Transverse colon (tissue), 4 donors: ENCODE measurements at regions of chr2 and their contacts with region 1.

Region 1: DNA sequence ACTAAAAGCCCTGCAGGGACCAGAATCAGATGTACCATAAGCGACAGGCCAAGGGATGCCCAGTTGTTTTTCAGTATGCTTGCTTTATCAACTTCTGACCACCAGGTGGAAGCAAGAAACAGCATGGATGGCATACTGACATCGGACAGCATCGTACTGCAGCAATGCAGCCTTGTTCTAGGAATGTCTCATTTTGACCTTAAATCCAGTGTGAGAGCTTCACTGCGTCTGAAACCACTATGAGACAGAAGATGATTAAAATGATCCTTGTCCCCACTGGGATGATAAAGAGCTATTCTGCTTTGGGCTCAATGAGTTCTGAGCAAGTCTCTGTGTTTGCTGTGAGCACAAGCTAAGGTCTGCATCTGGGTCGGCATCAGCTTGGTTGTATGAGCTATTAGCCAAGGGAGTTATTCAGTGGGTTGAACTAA is 54.3 kb downstream of the CDK15 start:
- DNase-seq: peak; percentile 35
- H3K4me3 ChIP-seq: no peak overlapping the region
- H3K27ac ChIP-seq: no peak overlapping the region
- H3K4me1 ChIP-seq: peaks cover 0 to 18% (median 10%) of the 10 kb centered on the region in 4 donors
- H3K27me3 ChIP-seq: peaks cover 18% of the 10 kb centered on the region
- CTCF ChIP-seq: peak; percentile 72 to 81 (median 79)
- EP300 ChIP-seq: no peak
- POLR2A ChIP-seq: no peak

Region 2: DNA sequence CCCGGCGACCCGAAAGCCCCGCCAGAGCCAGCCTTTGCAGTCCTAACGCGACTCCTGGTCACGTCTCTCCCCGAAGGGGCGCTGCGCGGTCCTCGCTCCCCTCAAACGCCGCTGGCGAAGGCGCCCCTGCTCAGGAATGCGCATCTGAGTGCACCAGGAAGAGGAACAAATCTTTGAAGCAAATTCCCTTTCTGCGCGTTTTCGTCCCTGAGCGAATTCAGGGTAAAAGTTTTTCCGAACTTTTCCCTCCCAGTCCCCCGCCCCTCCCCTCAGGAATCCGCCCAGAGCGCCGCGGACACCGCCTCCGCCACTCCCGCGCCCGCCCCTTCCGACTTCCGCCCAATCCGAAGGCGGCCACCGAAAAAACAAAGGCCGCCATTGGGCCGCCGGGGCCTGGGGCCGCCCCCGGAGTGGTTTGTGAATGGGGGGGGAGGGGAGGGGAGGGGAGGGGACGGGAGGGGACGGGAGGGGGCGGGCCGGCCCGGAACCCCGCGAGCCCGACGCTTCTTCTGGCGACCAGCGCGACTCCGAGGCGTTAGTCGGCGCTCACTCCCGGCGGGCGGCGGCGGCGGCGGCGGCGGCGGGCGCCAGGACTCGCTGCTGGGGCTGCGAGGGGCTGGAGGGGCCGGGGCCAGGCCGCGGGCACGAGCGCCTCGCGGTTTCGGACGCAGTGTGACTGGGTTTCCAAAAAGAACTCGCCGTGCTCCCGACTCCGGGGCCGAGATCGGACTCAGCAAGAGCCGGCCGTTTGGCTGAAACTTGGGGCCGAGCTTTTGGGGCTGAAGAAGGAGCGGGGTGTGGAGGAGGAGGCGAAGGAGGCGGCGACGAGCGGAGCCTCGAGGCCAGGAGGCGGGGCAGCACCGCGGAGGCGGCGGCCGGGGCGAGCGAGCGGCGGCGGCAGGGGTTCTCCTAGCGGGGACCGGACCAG is 172.9 kb after region 1 on chr2 and contains the start of gene FZD7:
- in situ Hi-C with region 1: loop called in 1 of 4 experiments (anchors 10 kb)
- intact Hi-C with region 1: no loop called
- DNase-seq: peak; percentile 94
- H3K4me3 ChIP-seq: peak within 1 kb of the TSS; percentile 69 to 88 (median 80)
- H3K27ac ChIP-seq: peak within 1 kb of the TSS; percentile 91 to 99 (median 94)
- H3K4me1 ChIP-seq: peaks cover 5 to 29% (median 20%) of the 10 kb centered on the region in 4 donors
- H3K27me3 ChIP-seq: peaks cover 39% of the 10 kb centered on the region
- CTCF ChIP-seq: peak in 4 of 5 experiments; percentile 0 to 17 (median 10)
- EP300 ChIP-seq: no peak
- POLR2A ChIP-seq: peak; percentile 29
- total RNA-seq, gene FZD7: 6.2 to 14.6 (median 13.3) TPM

Region 3: GRCh38 chr2:202172439-202173211 is 312.0 kb after region 1 on chr2:
- in situ Hi-C with region 1: loop called in 3 of 4 experiments (anchors 5 to 25 kb)
- intact Hi-C with region 1: loop called (anchors 5 kb)
- DNase-seq: no peak
- H3K4me3 ChIP-seq: no peak overlapping the region
- H3K27ac ChIP-seq: peak overlapping the region in 2 of 4 donors; percentile 44 to 52
- H3K4me1 ChIP-seq: peaks cover 0 to 20% (median 5%) of the 10 kb centered on the region in 4 donors
- H3K27me3 ChIP-seq: peaks cover 6% of the 10 kb centered on the region
- CTCF ChIP-seq: no peak
- EP300 ChIP-seq: no peak
- POLR2A ChIP-seq: no peak

Region 4: GRCh38 chr2:202178342-202178958 is 317.8 kb after region 1 on chr2:
- in situ Hi-C with region 1: loop called (anchors 5 to 25 kb)
- intact Hi-C with region 1: loop called (anchors 5 kb)
- DNase-seq: peak; percentile 47
- H3K4me3 ChIP-seq: no peak overlapping the region
- H3K27ac ChIP-seq: no peak overlapping the region
- H3K4me1 ChIP-seq: no peaks in the 10 kb centered on the region
- H3K27me3 ChIP-seq: no peaks in the 10 kb centered on the region
- CTCF ChIP-seq: peak; percentile 77 to 87 (median 84)
- EP300 ChIP-seq: no peak
- POLR2A ChIP-seq: no peak

Region 5: DNA sequence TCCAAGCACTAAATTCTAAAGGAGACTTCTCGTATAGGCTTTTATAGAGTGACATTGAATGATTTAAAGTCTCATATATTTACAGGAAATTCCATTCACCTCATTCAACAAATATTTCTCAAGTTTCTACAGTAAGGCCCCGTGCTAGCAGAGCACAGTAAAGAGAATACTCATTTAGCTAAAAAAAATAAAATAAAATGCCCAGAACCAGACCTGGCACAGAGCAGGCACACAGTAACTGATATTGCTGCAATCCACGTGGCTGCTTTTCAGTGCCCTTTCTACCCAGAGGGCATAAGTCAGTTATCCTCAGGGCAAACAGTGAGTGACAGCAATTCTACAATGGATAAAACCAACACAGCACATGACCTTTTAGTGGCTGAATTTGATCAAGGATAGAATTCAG is 325.2 kb after region 1 on chr2:
- in situ Hi-C with region 1: loop called in 2 of 4 experiments (anchors 10 to 25 kb)
- intact Hi-C with region 1: no loop called
- DNase-seq: no peak
- H3K4me3 ChIP-seq: no peak overlapping the region
- H3K27ac ChIP-seq: no peak overlapping the region
- H3K4me1 ChIP-seq: no peaks in the 10 kb centered on the region
- H3K27me3 ChIP-seq: no peaks in the 10 kb centered on the region
- CTCF ChIP-seq: no peak
- EP300 ChIP-seq: no peak
- POLR2A ChIP-seq: no peak